Activated CD4-positive, alpha-beta T cell treated with anti-CD3 and anti-CD28 coated beads for 36 hours (primary cell): ENCODE measurements at regions of chr2 and their contacts with region 1.

Region 1: DNA sequence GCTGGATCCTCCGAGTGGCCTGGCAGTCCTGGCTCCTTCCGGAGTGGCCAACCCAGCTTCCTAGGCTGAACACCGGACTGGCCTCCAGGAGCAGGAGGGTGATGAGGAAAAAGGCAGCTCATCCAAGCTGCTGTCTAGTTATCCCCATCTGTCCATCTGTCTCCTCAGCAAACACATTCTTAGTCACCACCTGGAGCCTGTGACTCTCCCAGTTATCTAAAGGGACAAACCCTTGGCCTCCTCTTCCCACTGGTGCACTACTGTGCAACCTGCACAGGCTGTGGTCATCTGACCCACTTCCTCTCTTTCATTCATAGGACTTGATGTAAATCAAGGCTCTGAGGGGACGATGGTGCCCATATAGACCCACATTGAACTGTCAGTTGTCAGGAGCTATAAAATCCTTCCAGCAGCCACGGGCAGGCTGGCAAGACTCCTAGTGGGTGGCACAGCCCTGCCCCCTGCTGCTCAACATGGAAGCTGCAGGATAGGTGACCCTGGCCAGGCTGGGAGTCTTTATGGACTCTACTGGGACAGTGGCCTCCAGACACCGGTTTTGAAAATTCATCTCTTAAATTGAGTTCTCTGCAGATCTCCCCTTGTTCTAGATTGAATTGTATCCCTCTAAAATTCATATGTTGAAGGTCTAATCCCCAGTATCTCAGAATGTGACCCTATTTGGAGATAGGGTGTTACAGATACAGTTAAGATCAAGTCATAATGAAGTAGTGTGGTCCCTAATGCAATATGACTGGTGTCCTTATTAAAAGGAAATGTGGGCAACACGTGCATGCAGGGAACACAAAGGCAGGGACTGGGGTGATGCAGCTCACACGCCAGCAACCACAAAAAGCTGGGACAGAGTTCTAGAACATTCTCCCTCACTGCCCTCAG is 29.3 kb upstream of the DUSP2 start:
- DNase-seq: peak; percentile 92
- ATAC-seq: peak; percentile 96
- H3K4me3 Mint-ChIP-seq: peak overlapping the region; percentile 60
- H3K27ac Mint-ChIP-seq: peak overlapping the region; percentile 88
- H3K4me1 Mint-ChIP-seq: peaks cover 22% of the 10 kb centered on the region
- H3K27me3 Mint-ChIP-seq: no peaks in the 10 kb centered on the region

Region 2: GRCh38 chr2:96091533-96092334 is 82.8 kb before region 1 on chr2:
- CTCF ChIA-PET with region 1: interaction called, 11 read pairs
- POLR2A ChIA-PET with region 1: no interaction called
- intact Hi-C with region 1: no loop called
- DNase-seq: no peak
- ATAC-seq: no peak
- H3K4me3 Mint-ChIP-seq: no peak overlapping the region
- H3K27ac Mint-ChIP-seq: no peak overlapping the region
- H3K4me1 Mint-ChIP-seq: peaks cover 2% of the 10 kb centered on the region
- H3K27me3 Mint-ChIP-seq: peaks cover 3% of the 10 kb centered on the region

Region 3: GRCh38 chr2:96131152-96131812 is 43.2 kb before region 1 on chr2:
- CTCF ChIA-PET with region 1: interaction called, 347 read pairs
- POLR2A ChIA-PET with region 1: interaction called, 136 read pairs
- intact Hi-C with region 1: no loop called
- DNase-seq: peak; percentile 76
- ATAC-seq: peak; percentile 86
- H3K4me3 Mint-ChIP-seq: peak overlapping the region; percentile 5
- H3K27ac Mint-ChIP-seq: peak overlapping the region; percentile 91
- H3K4me1 Mint-ChIP-seq: peaks cover 18% of the 10 kb centered on the region
- H3K27me3 Mint-ChIP-seq: no peaks in the 10 kb centered on the region

Region 4: GRCh38 chr2:96157651-96158553 is 16.6 kb before region 1 on chr2:
- CTCF ChIA-PET with region 1: interaction called, 33 read pairs
- POLR2A ChIA-PET with region 1: interaction called, 6 read pairs
- intact Hi-C with region 1: loop called in 1 of 2 experiments (anchors 1 kb)
- DNase-seq: peak; percentile 99
- ATAC-seq: peak; percentile 79
- H3K4me3 Mint-ChIP-seq: peak overlapping the region; percentile 61
- H3K27ac Mint-ChIP-seq: peak overlapping the region; percentile 98
- H3K4me1 Mint-ChIP-seq: peaks cover 90% of the 10 kb centered on the region
- H3K27me3 Mint-ChIP-seq: no peaks in the 10 kb centered on the region

Region 5: GRCh38 chr2:96423828-96424227 is 249.3 kb after region 1 on chr2:
- CTCF ChIA-PET with region 1: no interaction called
- POLR2A ChIA-PET with region 1: no interaction called
- intact Hi-C with region 1: no loop called
- DNase-seq: no peak
- ATAC-seq: no peak
- H3K4me3 Mint-ChIP-seq: no peak overlapping the region
- H3K27ac Mint-ChIP-seq: no peak overlapping the region
- H3K4me1 Mint-ChIP-seq: peaks cover 10% of the 10 kb centered on the region
- H3K27me3 Mint-ChIP-seq: peaks cover 9% of the 10 kb centered on the region

Region 6: DNA sequence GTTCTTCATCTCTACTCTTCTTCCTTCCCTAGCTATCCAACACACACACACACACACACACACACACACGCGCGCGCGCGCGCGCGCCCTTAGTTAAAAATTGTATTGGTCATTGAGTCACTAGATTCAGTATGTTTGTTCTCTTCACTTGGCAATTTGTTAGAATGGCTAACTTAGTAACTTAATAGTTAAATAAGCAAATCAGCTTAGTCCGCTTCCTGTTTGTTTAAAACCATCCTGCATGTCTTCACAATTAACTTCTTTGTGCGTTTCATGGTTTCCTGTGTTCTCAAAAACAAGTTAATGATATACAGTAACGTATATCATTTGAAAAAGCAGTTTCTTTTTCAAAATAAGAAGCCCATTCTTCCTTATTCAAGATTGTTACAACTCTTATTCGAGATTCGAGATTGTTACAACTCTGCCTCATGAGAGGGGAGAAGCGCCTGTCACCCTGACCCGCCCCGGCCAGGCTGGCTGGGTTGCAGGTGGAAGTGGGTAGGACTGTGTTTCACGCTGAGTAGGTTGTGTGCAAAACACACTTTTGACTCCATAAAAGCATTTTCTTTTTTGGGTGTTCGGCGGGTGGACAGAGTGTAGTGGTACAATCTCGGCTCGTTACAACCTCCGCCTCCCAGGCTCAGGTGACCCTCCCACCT is 632.1 kb after region 1 on chr2:
- CTCF ChIA-PET with region 1: no interaction called
- POLR2A ChIA-PET with region 1: no interaction called
- intact Hi-C with region 1: no loop called
- DNase-seq: peak; percentile 44
- ATAC-seq: peak; percentile 56
- H3K4me3 Mint-ChIP-seq: peak overlapping the region; percentile 6
- H3K27ac Mint-ChIP-seq: peak overlapping the region; percentile 64
- H3K4me1 Mint-ChIP-seq: peaks cover 13% of the 10 kb centered on the region
- H3K27me3 Mint-ChIP-seq: no peaks in the 10 kb centered on the region